Sigmoid colon (tissue), 7 donors: ENCODE measurements at regions of chr17 and their contacts with region 1.

Region 1: GRCh38 chr17:55726440-55726839 is 3.8 kb upstream of the TMEM100 start:
- DNase-seq: peak; percentile 84
- H3K4me3 ChIP-seq: no peak overlapping the region
- H3K27ac ChIP-seq: peak overlapping the region; percentile 28 to 85 (median 81)
- H3K4me1 ChIP-seq: peaks cover 0 to 83% (median 71%) of the 10 kb centered on the region in 4 donors
- H3K27me3 ChIP-seq: no peaks in the 10 kb centered on the region
- CTCF ChIP-seq: no peak
- EP300 ChIP-seq: peak in 1 of 4 donors; percentile 1
- POLR2A ChIP-seq: no peak

Region 2: GRCh38 chr17:55356434-55357328 is 369.8 kb before region 1 on chr17:
- intact Hi-C with region 1: loop called (anchors 10 kb)
- DNase-seq: peak; percentile 68
- H3K4me3 ChIP-seq: no peak overlapping the region
- H3K27ac ChIP-seq: no peak overlapping the region
- H3K4me1 ChIP-seq: no peaks in the 10 kb centered on the region
- H3K27me3 ChIP-seq: no peaks in the 10 kb centered on the region
- CTCF ChIP-seq: peak; percentile 43 to 75 (median 64)
- EP300 ChIP-seq: no peak
- POLR2A ChIP-seq: no peak

Region 3: DNA sequence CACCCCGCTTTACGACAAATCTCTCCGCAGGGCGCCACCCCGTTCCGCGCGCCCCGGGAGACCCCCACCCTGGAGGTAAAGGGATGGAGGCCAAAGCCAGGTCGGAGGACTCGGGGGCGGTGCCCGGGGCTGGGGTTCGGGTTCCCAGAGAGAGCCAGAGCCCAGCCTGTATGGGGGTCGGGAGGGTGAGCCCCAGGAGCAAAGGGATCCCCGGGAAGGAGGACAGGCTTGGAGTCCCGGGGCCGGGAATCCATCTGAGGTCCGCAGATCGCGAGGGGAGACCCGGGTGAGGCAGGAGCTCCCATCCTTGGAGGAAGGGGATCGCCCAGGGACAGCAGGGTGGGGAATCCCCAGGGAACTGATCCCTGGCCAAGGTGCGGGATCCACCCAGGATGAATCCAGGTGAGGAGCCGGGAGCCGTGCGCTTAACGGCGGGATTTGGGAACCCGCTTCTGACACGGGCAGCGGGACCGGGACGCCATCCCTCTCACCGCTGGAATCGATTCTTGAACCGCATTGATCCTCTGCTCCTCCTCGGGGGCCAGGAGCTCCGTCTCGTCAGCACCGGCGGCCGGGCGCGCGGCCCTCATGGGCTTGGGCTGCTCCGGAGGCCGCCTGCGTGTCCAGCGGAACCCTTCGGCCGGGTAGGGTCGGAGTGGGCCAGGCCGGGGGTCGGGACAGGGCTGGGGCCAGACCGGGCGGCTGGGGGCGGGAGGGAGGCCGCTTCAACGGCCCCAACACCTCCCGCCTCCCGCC is 305.1 kb before region 1 on chr17 and contains the start of gene MMD:
- intact Hi-C with region 1: loop called (anchors 10 kb)
- DNase-seq: peak; percentile 78
- H3K4me3 ChIP-seq: peak within 1 kb of the TSS; percentile 71 to 97 (median 96)
- H3K27ac ChIP-seq: peak within 1 kb of the TSS; percentile 90 to 97 (median 94)
- H3K4me1 ChIP-seq: peaks cover 0 to 39% (median 27%) of the 10 kb centered on the region in 4 donors
- H3K27me3 ChIP-seq: no peaks in the 10 kb centered on the region
- CTCF ChIP-seq: no peak
- EP300 ChIP-seq: peak in 1 of 4 donors; percentile 3
- POLR2A ChIP-seq: peak; percentile 30 to 42
- total RNA-seq, gene MMD: 26.9 to 51.3 (median 34.6) TPM

Region 4: GRCh38 chr17:55437159-55437605 is 289.3 kb before region 1 on chr17:
- intact Hi-C with region 1: loop called (anchors 5 kb)
- DNase-seq: no peak
- H3K4me3 ChIP-seq: no peak overlapping the region
- H3K27ac ChIP-seq: peak overlapping the region in 2 of 4 donors; percentile 6 to 42
- H3K4me1 ChIP-seq: peaks cover 0 to 43% (median 42%) of the 10 kb centered on the region in 4 donors
- H3K27me3 ChIP-seq: no peaks in the 10 kb centered on the region
- CTCF ChIP-seq: no peak
- EP300 ChIP-seq: no peak
- POLR2A ChIP-seq: no peak

Region 5: GRCh38 chr17:55607731-55608341 is 118.6 kb before region 1 on chr17:
- intact Hi-C with region 1: loop called (anchors 5 kb)
- DNase-seq: peak; percentile 96
- H3K4me3 ChIP-seq: no peak overlapping the region
- H3K27ac ChIP-seq: peak overlapping the region; percentile 46 to 66 (median 56)
- H3K4me1 ChIP-seq: peaks cover 3 to 62% (median 52%) of the 10 kb centered on the region in 4 donors
- H3K27me3 ChIP-seq: no peaks in the 10 kb centered on the region
- CTCF ChIP-seq: no peak
- EP300 ChIP-seq: peak in 1 of 4 donors; percentile 43
- POLR2A ChIP-seq: no peak

Region 6: DNA sequence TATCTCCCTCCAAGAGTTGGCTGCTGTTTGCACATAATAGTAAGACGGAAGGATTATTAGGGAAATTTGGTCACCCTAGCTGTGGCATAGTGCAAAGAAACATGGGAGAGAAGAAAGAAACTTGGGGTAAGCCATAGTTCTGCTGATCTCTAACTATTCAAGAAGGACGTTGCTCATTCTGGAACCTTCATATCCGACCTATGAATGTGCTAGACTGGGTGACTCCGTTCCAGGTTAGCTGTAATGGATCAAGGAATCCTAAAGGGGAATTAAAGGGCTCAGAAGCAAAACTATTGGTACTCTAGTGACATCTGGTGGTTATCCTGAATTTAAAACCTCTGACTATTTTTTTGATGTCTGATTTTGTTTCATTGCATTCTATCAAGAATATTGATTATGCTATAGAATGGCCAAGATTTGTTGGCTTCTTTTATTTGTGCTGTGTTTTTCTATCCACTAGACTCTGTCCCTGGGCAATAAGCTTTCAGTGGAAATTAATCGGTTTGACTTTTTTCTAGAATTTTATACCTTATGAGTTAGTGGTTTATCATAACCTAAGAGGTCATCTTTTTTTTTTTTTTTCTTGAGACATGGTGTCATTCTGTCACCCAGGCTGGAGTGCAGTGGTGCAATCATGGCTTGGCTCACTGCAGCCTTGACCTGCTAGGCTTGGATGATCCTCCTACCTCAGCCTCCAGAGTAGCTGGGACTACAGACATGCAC is 43.9 kb after region 1 on chr17:
- intact Hi-C with region 1: loop called (anchors 5 kb)
- DNase-seq: no peak
- H3K4me3 ChIP-seq: no peak overlapping the region
- H3K27ac ChIP-seq: peak overlapping the region in 3 of 4 donors; percentile 36 to 63 (median 48)
- H3K4me1 ChIP-seq: peaks cover 0 to 21% (median 19%) of the 10 kb centered on the region in 4 donors
- H3K27me3 ChIP-seq: no peaks in the 10 kb centered on the region
- CTCF ChIP-seq: peak; percentile 31 to 62 (median 57)
- EP300 ChIP-seq: no peak
- POLR2A ChIP-seq: no peak